ENCODE measurements at regions of chr9 and their contacts with region 1.

Region 1: GRCh38 chr9:75027187-75028107 is 646 bp downstream of the CARNMT1 start:
- DNase-seq: peak; percentile 75
- ATAC-seq: peak; percentile 62 to 81

Region 2: DNA sequence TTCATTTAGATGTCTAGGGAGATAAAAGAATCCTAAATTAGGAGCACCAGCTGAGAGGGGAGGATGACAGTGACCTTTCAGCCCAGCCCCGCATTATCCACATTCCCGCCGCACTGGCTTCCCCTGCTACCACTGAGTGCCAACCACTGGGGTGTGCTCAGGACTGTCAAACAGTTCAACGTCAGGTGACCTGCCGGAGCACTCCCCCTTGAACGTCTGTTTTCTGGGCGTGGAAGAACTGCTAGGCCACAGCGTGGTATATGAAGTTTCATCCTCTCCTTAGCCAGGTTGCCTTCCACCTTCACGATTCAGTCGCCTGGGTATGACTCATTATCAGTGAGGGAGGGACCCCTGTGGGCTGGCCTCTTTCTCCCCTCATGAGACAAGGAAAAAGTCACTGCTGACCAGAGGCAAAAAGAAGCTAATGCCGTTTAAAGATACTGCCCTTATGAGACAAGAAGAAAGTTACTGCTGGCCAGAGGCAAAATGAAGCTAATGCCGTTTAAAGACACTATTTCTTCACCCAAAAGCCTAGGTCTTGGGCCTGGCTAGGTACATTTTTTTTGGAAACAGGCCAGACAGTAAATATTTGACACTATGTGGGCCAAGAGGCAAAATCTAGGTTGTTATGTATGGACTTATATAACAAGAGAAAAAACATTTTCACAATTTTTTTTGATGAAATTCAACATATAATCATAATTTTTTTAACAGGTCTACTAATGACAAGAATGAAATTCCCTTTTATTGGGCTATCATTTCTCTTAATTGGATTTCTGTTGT is 55.9 kb after region 1 on chr9:
- intact Hi-C with region 1: loop called in 1 of 2 experiments (anchors 5 kb)
- DNase-seq: peak; percentile 42
- ATAC-seq: peak; percentile 7 to 12

Region 3: GRCh38 chr9:75170898-75171360 is 143.5 kb after region 1 on chr9:
- intact Hi-C with region 1: no loop called
- DNase-seq: no peak
- ATAC-seq: no peak